ENCODE measurements at regions of chr4 and their contacts with region 1.

Region 1: GRCh38 chr4:112231779-112232713 is at the start of gene AP1AR:
- DNase-seq: peak; percentile 35
- ATAC-seq: peak; percentile 82
- H3K4me3 ChIP-seq: peak within 1 kb of the TSS; percentile 88
- H3K27ac ChIP-seq: peak within 1 kb of the TSS; percentile 93
- H3K4me1 ChIP-seq: no peaks in the 10 kb centered on the region
- H3K27me3 ChIP-seq: no peaks in the 10 kb centered on the region
- CTCF ChIP-seq: peak; percentile 40 to 61 (median 52)
- EP300 ChIP-seq: no peak
- POLR2A ChIP-seq: peak; percentile 94
- RAD21 ChIP-seq: peak; percentile 28; the same call in 1 of the 2 replicates
- polyA plus RNA-seq, gene AP1AR: 5.6 to 7.2 TPM

Region 2: DNA sequence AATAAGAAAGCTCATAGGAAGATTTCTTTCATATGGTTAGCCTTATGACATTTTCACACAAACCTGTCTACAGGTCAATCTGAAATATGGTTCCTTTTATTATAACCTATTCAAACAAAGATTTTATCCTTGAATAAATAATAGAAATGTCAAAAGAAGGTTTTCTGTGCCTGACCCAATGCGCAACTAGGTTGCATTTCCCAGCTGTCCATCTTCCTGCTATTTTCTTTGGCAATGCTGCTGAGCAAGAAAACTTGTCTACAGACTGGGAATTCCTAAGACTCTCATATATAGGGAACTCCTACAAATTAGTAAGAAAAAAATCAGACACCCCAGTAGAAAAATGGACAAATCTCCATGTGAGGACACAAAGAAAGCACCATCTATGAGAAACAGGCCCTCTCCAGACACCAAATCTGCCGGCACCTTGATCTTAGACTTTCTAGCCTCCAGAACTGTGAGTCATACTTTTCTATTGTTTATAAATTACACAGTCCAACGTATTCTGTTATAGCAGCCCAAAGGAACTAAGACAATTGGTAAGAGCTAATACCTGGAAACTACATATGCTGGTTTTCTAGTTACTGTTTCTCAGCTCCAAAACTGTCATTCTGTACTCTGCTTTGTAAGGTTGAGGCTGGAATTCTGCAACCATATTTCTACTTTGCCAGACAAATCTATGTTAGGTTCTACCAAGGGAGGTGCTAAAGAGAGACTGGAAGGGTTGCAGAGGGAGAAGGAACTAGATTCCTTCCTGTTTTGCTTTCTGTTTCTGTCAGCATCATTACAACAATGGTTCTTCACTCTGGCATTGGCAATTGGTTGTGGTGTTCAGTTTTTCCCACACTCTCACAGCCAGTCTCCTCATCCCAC is 122.6 kb before region 1 on chr4:
- CTCF ChIA-PET with region 1: interaction called, 135 read pairs
- POLR2A ChIA-PET with region 1: interaction called, 3 read pairs
- RAD21 ChIA-PET with region 1: interaction called, 4 read pairs
- SMC1A ChIA-PET with region 1: interaction called, 71 read pairs
- in situ Hi-C with region 1: loop called (anchors 5 kb)
- intact Hi-C with region 1: no loop called
- DNase-seq: peak; percentile 13
- ATAC-seq: peak; percentile 71
- H3K4me3 ChIP-seq: no peak overlapping the region
- H3K27ac ChIP-seq: no peak overlapping the region
- H3K4me1 ChIP-seq: no peaks in the 10 kb centered on the region
- H3K27me3 ChIP-seq: no peaks in the 10 kb centered on the region
- CTCF ChIP-seq: no peak
- EP300 ChIP-seq: no peak
- POLR2A ChIP-seq: no peak
- RAD21 ChIP-seq: no peak

Region 3: DNA sequence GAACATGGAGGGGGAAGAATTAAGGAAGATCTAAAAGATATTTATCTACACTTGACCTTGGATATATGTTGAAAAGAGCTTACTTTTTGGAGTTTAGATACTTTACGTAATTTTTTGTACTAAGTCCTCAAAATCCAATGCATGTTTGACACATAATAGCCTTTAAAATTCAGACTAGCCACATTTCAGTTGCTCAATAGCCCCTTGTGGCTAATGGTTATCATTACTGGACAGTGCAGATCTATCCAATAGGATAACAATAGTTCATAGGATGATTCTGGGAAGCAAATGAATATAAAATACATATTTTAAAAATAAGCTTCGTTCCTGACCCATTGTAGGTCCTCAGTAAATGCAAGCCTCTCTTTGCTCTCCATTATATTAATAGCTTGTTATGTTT is 13.3 kb after region 1 on chr4:
- CTCF ChIA-PET with region 1: interaction called, 81 read pairs
- POLR2A ChIA-PET with region 1: interaction called, 7 read pairs
- RAD21 ChIA-PET with region 1: interaction called, 7 read pairs
- SMC1A ChIA-PET with region 1: interaction called, 12 read pairs
- in situ Hi-C with region 1: no loop called
- intact Hi-C with region 1: no loop called
- DNase-seq: no peak
- ATAC-seq: no peak
- H3K4me3 ChIP-seq: no peak overlapping the region
- H3K27ac ChIP-seq: no peak overlapping the region
- H3K4me1 ChIP-seq: no peaks in the 10 kb centered on the region
- H3K27me3 ChIP-seq: no peaks in the 10 kb centered on the region
- CTCF ChIP-seq: no peak
- EP300 ChIP-seq: no peak
- POLR2A ChIP-seq: no peak
- RAD21 ChIP-seq: no peak

Region 4: DNA sequence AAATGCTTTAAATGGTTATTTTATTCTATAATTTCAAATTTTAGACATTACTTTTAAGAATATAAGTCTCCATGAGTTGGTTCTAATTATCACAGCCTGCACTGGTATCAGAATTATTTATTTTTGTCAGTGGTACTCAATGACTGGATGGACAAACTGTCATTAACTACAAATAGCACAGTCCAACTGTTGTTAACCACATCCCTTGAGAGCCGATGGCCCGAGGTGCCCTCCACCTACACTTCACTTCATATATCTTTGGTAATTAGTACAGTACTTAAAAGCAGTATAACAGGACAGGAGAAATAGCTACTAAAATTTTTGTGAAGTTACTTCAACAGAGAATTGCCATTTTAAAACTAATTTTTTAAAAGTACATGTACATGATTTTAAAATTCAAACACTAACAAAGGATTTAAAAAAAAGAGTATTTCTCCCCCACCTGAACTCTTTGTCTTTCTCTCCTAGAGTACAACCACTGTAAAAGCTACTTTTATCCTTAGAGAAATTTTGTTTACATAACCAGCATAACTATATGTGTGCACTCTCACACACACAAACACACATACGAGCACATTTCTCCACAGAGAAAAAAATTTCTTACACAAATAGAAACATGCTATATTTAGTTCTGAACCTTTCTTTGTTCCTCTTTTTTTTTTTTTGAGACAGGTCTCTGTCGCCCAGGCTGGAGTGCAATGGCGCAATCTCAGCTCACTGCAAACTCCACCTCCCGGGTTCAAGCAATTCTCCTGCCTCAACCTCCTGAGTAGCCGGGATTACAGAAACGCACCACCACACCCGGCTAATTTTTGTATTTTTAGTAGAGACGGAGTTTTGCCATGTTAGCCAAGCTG is 47.2 kb after region 1 on chr4:
- CTCF ChIA-PET with region 1: interaction called, 7 read pairs
- POLR2A ChIA-PET with region 1: interaction called, 8 read pairs
- RAD21 ChIA-PET with region 1: interaction called, 10 read pairs
- SMC1A ChIA-PET with region 1: interaction called, 7 read pairs
- in situ Hi-C with region 1: no loop called
- intact Hi-C with region 1: loop called (anchors 2 kb)
- DNase-seq: no peak
- ATAC-seq: peak; percentile 65
- H3K4me3 ChIP-seq: peak overlapping the region; percentile 80
- H3K27ac ChIP-seq: peak overlapping the region; percentile 99
- H3K4me1 ChIP-seq: peaks cover 33% of the 10 kb centered on the region
- H3K27me3 ChIP-seq: no peaks in the 10 kb centered on the region
- CTCF ChIP-seq: no peak
- EP300 ChIP-seq: peak; percentile 46 to 49; a peak in 2 of 4 replicates
- POLR2A ChIP-seq: no peak
- RAD21 ChIP-seq: no peak

Region 5: DNA sequence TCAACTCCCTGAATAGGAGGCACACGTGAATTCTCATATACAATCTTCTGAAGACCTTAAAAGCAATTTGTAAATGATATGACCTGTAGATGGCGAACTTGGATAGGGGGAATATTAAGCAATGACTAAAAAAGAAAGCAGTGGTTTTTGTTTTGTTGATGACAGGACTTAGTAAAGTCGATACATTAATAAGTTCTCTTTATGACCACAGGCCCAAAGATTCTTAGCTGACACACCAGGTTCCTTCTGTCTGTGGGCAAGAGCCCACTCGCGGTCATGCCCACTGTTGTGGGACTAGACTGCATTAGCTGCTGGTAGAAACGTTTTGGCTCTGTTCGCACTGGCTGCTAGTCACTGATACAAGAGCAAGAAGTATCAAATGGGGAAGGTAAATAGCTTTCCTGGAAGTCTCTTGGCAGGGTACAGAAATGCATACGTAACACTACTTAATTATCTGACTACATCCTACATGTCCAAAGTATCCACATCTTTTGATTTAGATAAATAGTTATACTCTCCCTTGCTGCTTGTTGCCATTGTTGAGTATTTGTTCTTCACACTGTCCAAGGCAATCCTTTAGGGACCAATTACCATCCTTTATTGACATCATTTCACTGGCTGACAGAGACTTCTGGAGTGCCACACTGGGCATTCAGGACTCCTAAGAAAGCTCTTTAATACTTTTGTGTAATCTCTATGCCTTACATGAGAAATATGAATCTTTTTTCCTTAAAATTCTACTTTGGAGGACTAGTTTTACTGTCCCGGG is 96.1 kb after region 1 on chr4:
- CTCF ChIA-PET with region 1: interaction called, 16 read pairs
- POLR2A ChIA-PET with region 1: no interaction called
- RAD21 ChIA-PET with region 1: interaction called, 3 read pairs
- SMC1A ChIA-PET with region 1: interaction called, 8 read pairs
- in situ Hi-C with region 1: no loop called
- intact Hi-C with region 1: no loop called
- DNase-seq: peak; percentile 73
- ATAC-seq: peak; percentile 92
- H3K4me3 ChIP-seq: no peak overlapping the region
- H3K27ac ChIP-seq: no peak overlapping the region
- H3K4me1 ChIP-seq: peaks cover 4% of the 10 kb centered on the region
- H3K27me3 ChIP-seq: no peaks in the 10 kb centered on the region
- CTCF ChIP-seq: peak; percentile 51 to 78 (median 52); a peak in 5 of 6 replicates
- EP300 ChIP-seq: 0 out of 4 replicates have a peak, but pooled peaks of 1 of the 2 experiments have one; percentile 17
- POLR2A ChIP-seq: no peak
- RAD21 ChIP-seq: peak; percentile 90

Measured in GM12878 (cell line).